Sciatic nerve (tissue), 2 donors: ENCODE measurements at regions of chr1 and their contacts with region 1.

Region 1: GRCh38 chr1:62024690-62025089 is 170.0 kb upstream of the L1TD1 start:
- DNase-seq: no peak
- ATAC-seq: no peak

Region 2: DNA sequence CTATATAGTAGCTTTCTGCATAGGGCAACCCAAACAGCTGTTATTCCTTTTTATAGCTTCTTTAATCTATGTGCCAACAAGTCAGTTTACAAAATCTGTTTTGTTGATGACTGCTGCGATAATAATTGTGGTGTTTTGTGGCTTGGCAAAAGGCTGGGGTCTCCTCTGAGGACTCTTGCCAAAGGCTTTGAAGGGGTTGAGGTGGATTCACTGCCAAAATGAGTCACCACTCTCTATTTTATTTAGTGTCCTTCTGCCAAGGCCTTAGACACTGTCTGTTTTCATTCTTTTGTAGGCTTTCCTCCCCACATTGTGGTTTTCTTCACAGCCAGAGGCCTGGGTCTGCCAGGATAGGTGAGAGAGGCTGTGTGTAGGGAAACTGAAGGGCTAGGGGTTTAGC is 780.6 kb before region 1 on chr1:
- intact Hi-C with region 1: loop called (anchors 5 kb)
- DNase-seq: no peak
- ATAC-seq: peak; percentile 64

Region 3: GRCh38 chr1:62082456-62083363 is 58.0 kb after region 1 on chr1:
- intact Hi-C with region 1: no loop called
- DNase-seq: peak; percentile 63
- ATAC-seq: peak; percentile 70